PC-9 (cell line): ENCODE measurements at regions of chr4 and their contacts with region 1.

Region 1: GRCh38 chr4:110631584-110632505 is 9.0 kb upstream of the PITX2 start:
- DNase-seq: peak; percentile 40 to 66
- H3K4me3 ChIP-seq: peak overlapping the region; percentile 42; the same call in 1 of the 2 replicates
- H3K27ac ChIP-seq: no peak overlapping the region
- H3K4me1 ChIP-seq: no peaks in the 10 kb centered on the region
- H3K27me3 ChIP-seq: no peaks in the 10 kb centered on the region
- CTCF ChIP-seq: peak; percentile 77

Region 2: DNA sequence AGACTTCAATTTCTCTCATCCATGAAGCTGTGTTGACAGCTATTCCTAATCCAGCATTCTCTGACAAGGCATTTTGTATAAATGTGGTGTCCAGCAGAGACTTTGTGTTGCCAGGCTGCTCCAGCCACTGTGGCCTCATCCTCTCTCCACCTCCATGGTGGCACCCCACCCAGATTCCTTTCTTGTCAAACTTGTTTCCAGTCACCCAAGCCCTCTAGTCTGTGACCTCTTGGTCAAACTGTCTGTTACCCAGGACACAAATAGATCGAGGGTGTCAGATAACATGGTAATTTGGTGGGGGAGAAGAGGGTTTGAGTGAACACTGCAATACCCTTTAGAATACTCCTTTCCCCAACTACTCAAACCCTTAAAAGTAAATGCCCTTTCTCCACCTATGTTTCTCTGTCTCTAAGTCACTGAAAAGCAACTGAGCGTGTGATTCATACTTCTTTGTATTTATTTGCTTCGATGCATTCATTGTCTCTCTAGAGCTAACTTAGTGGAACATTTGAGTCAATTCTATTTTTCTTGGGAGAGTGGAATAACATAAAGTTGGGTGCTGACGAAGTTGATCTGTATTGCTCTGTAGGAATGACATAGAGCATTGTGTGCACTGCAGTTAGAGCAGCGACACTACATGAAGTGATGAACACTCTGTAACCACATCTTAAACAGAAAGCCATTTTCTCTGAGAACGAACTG is 22.6 kb before region 1 on chr4:
- CTCF ChIA-PET with region 1: no interaction called
- POLR2A ChIA-PET with region 1: interaction called, 11 read pairs
- intact Hi-C with region 1: no loop called
- DNase-seq: peak; percentile 53 to 61
- H3K4me3 ChIP-seq: 0 out of 2 replicates have a peak overlapping the region, but pooled peaks have one; percentile 36
- H3K27ac ChIP-seq: no peak overlapping the region
- H3K4me1 ChIP-seq: peaks cover 21% of the 10 kb centered on the region
- H3K27me3 ChIP-seq: no peaks in the 10 kb centered on the region
- CTCF ChIP-seq: no peak

Region 3: DNA sequence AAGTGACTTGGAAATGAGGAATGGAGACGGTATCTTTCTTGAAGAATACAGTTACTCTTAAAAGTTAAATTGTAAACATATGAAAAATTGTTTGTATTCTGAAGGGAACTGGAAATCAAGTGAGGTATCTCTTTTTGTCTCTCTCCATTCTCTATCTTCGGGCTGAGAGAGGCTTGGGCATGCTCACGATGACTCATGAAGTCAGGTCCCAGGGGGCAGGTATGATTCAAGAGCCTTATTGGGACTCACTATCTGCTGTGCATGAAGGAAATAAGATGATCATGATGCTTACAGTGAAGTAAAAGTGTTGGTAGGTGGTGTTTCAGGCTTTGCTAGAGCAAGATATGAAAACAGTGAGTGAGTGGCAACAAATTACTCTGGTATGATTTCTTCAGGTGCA is 191.4 kb after region 1 on chr4:
- CTCF ChIA-PET with region 1: no interaction called
- POLR2A ChIA-PET with region 1: no interaction called
- intact Hi-C with region 1: no loop called
- DNase-seq: no peak
- H3K4me3 ChIP-seq: no peak overlapping the region
- H3K27ac ChIP-seq: no peak overlapping the region
- H3K4me1 ChIP-seq: no peaks in the 10 kb centered on the region
- H3K27me3 ChIP-seq: no peaks in the 10 kb centered on the region
- CTCF ChIP-seq: no peak

Region 4: DNA sequence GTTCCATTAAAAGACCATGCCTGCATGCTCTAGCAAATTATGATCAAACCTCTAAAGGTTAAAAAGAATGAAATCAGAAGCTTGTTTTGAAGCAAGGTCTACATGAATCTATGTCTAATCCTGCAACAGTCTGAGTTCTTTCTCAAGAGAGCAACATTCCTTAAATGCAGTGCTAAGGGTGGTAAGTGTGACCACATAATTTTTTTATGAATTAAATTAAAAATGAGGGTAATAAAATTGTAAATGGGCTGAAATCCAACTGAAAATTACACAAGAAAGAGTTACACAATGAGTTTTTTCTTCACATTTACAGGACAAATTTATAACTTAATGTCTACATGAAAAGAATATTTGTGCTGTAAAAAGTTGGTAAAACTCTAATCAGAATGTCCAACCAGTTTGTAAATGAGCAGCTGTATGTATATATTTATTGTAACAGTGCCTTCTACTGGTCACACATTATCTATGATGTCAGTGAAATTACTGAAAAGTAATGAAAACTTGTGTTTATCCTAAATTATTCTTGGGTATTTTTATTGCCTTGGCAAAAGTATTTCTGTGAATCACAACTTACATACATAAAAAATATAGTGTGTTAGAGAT is 327.3 kb after region 1 on chr4:
- CTCF ChIA-PET with region 1: no interaction called
- POLR2A ChIA-PET with region 1: no interaction called
- intact Hi-C with region 1: loop called (anchors 5 kb)
- DNase-seq: no peak
- H3K4me3 ChIP-seq: no peak overlapping the region
- H3K27ac ChIP-seq: no peak overlapping the region
- H3K4me1 ChIP-seq: no peaks in the 10 kb centered on the region
- H3K27me3 ChIP-seq: no peaks in the 10 kb centered on the region
- CTCF ChIP-seq: peak; percentile 43; the same call in 1 of the 2 replicates

Region 5: GRCh38 chr4:110970642-110971041 is 338.8 kb after region 1 on chr4:
- CTCF ChIA-PET with region 1: no interaction called
- POLR2A ChIA-PET with region 1: no interaction called
- intact Hi-C with region 1: loop called (anchors 5 kb)
- DNase-seq: peak in 1 of 2 experiments; percentile 37
- H3K4me3 ChIP-seq: no peak overlapping the region
- H3K27ac ChIP-seq: no peak overlapping the region
- H3K4me1 ChIP-seq: no peaks in the 10 kb centered on the region
- H3K27me3 ChIP-seq: no peaks in the 10 kb centered on the region
- CTCF ChIP-seq: peak; percentile 53; the same call in 1 of the 2 replicates

Region 6: DNA sequence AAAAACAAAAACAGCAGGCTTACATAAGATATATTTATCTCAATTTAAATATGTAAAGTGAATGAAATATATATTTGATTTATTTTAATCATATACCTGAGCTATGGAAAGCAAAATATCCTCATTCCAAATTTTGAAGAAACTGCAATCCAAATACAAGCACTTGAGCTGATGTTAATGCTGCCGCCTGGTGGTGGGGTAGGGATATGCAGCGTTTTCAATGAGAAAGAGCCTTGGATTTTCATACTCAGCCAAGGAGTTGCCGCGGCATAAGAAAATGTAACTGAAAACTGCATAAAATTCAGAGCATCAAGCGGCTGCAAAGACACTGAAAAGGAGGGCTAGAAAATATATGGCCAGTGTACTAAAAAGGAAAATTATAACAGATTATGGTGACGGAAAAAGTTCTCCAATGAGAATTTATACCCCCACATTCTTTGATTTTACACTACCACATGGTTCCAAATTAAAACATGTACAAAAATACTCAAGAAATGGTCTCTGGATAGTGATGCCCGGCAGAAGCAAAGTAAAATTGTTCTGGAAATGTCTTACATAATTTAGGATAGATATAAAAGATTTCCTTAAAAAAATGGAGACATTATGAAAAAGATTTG is 651.3 kb after region 1 on chr4:
- CTCF ChIA-PET with region 1: no interaction called
- POLR2A ChIA-PET with region 1: no interaction called
- intact Hi-C with region 1: loop called (anchors 2 kb)
- DNase-seq: peak in 1 of 2 experiments; percentile 44
- H3K4me3 ChIP-seq: no peak overlapping the region
- H3K27ac ChIP-seq: no peak overlapping the region
- H3K4me1 ChIP-seq: no peaks in the 10 kb centered on the region
- H3K27me3 ChIP-seq: no peaks in the 10 kb centered on the region
- CTCF ChIP-seq: peak; percentile 84